Motor neuron (in vitro differentiated cells): ENCODE measurements at regions of chr4 and their contacts with region 1.

Region 1: DNA sequence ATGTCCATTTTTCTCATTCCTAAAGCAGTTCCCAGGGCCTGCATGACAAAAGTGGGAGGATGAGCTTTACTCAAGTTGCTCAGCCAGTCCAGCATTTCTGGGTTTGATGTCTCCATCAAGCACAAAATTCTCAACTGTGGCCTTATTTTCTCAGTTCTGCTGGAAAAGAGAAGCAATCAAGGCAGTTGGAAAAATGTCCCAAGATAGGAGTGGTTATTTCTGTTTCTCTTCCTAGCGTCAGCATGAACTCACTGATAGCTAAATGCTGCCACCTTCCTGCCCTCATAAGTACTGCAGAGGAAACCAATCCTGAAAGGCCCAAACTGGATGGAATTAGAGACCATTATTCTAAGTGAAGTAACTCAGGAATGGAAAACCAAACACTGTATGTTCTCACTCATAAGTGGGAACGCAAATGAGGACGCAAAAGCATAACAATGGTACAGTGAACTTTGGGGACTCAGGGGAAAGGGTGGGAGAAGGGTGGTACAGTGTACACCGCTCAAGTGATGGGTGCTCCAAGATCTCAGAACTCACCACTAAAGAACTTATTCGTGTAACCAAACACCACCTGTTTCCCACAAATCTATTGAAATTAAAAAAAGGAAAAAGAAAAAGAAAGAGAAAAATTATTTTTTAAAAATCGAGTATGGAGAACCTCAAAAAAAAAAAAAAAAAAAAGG is 29.6 kb downstream of the ADH7 start:
- ATAC-seq: peak in 7 of 8 experiments; percentile 59 to 88 (median 78)
- H3K4me3 ChIP-seq: no peak overlapping the region
- H3K27ac ChIP-seq: no peak overlapping the region
- H3K4me1 ChIP-seq: no peaks in the 10 kb centered on the region

Region 2: GRCh38 chr4:99117876-99118693 is 287.5 kb before region 1 on chr4:
- in situ Hi-C with region 1: loop called in 2 of 9 experiments (anchors 10 to 25 kb)
- ATAC-seq: no peak
- H3K4me3 ChIP-seq: no peak overlapping the region
- H3K27ac ChIP-seq: no peak overlapping the region
- H3K4me1 ChIP-seq: no peaks in the 10 kb centered on the region

Region 3: DNA sequence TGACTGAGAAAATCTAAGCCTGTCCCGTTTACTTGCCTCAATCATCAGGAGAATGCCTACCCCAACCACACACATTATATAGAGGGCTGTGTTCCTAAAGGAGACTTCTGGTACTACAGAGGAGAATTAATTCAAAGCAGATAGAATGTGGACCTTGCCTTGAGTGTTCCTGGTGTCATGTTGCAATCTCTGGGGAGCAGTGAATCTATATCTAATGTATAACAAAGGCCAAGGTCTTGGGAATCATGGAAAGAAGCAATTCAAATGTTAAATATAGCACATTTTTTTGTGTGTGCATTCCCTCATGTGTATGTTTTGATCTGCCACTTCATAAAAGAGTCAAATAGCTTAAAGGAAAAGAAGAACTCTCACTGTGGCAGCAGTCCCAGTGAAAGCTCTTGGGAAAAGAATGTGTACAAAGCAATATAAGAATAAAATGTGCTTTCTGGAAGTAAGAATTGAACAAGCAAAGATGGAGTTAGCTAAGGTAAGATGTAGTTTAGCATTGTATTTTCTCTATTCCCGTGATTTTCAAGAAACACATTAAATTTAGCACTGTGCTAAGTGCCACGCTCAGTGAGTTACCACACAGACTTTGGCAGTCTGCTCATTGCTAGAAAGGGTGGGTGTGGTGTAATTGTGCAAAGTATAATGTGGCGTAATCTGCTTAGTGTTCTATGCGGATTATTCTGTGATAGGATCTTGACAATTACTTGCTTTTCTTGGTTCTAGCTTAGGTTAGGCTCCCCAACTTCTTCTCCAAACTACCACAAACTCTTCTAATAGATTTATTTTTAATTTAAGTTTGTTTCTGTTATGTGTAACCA is 200.2 kb before region 1 on chr4:
- in situ Hi-C with region 1: loop called in 1 of 9 experiments (anchors 10 kb)
- ATAC-seq: peak in 6 of 8 experiments; percentile 60 to 95 (median 81)
- H3K4me3 ChIP-seq: no peak overlapping the region
- H3K27ac ChIP-seq: no peak overlapping the region
- H3K4me1 ChIP-seq: peaks cover 7 to 12% of the 10 kb centered on the region in 2 donors